HCT116 (cell line): ENCODE measurements at regions of chr19 and their contacts with region 1.

Region 1: GRCh38 chr19:39406656-39407393 is at the start of gene ZFP36:
- DNase-seq: peak; percentile 68
- ATAC-seq: peak; percentile 31
- H3K4me3 ChIP-seq: peak within 1 kb of the TSS; percentile 90 to 98
- H3K27ac ChIP-seq: peak within 1 kb of the TSS; percentile 100
- H3K4me1 ChIP-seq: peaks cover 52 to 88% of the 10 kb centered on the region in 2 experiments
- H3K27me3 ChIP-seq: no peaks in the 10 kb centered on the region
- CTCF ChIP-seq: no peak
- POLR2A ChIP-seq: peak; percentile 99
- RAD21 ChIP-seq: no peak
- total RNA-seq, gene ZFP36: 131 TPM

Region 2: DNA sequence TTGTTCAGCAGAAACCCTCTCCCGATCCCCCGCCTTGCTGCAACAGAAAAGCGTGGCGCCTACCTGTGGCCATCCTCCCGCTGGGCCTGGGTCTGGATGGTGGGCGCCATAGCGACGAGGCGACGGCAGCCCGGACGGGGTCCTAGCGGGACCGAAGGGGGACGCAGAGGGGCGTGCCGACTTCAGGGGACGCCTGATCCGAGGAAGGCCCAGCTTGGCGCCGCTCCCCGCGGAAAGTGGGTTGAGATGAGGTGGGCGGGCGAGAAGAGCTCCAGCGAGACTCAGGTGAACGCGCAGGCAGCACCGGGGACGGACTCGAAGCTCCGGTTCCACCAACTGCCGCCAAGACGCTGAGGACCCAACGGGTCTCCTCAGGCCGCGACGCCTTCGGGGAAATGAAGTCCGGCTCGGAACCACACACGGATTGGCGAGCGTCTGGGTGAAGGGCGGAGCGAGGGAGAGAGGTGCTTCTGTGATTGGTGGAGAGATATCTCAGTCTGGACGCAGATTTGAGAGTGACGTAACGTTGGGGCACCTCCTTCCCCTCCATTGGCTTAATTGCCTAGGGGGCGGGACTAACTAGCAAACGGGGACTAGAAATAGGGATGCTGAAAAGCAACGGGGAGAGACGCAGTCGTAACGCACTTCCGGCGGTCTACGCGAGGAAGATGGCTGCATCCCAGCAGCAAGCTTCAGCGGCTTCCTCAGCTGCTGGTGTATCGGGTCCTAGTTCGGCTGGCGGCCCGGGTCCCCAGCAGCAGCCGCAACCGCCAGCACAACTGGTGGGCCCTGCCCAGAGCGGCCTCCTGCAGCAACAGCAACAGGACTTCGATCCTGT is 15.9 kb before region 1 on chr19 and contains the starts of genes MED29 and PAF1:
- CTCF ChIA-PET with region 1: interaction called, 8 read pairs
- POLR2A ChIA-PET with region 1: interaction called, 39 read pairs
- RAD21 ChIA-PET with region 1: interaction called, 4 to 21 read pairs
- intact Hi-C with region 1: loop called (anchors 1 kb)
- DNase-seq: peak; percentile 99
- ATAC-seq: peak; percentile 94
- H3K4me3 ChIP-seq: peak within 1 kb of the TSS; percentile 91 to 100
- H3K27ac ChIP-seq: peak within 1 kb of the TSS; percentile 96
- H3K4me1 ChIP-seq: peaks cover 14% of the 10 kb centered on the region in 2 experiments
- H3K27me3 ChIP-seq: no peaks in the 10 kb centered on the region
- CTCF ChIP-seq: no peak
- POLR2A ChIP-seq: peak; percentile 97
- RAD21 ChIP-seq: no peak
- total RNA-seq, gene MED29: 32.0 TPM
- total RNA-seq, gene PAF1: 53.5 TPM